CD8-positive, alpha-beta T cell (primary cell): ENCODE measurements at regions of chr5 and their contacts with region 1.

Region 1: DNA sequence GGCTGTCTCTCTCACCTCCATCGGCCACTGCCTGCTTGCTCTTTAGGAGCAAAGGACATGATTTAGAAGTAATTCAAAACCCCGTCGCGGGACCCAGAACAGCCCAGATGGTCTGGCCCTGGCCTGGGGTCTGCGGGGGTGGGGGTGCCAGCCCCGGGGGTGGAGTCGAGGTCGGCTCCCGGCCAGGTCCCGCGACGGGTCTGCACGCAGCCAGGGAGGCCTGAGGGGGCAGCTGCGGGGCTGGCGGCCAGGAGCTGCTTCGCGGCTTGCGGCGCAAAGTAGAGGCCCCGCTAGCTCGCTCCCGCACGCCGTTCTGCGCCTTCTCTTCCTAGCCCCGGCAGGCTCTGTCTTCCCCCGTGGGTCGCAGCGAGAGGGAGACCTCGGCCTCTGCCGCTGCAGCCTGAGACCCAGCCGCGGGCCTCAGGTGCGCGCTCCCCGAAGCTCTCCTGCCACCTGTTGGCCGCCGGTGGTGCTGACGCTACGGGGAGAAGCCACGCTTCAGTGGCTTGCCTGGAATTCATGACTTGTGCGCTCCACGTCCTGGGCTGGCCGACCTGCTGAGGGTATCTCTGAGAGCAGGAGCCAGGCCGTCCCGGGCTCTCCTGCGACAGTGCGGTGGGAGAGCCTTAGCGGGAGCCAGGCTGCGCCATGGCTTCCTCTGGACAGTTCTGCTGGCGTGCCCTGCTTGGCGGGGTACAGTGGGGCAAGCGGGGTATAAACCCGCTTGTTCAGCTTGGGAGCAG is 157.2 kb upstream of the PITX1 start:
- DNase-seq: peak; percentile 37 to 81 (median 66)
- ATAC-seq: peak; percentile 94
- H3K4me3 ChIP-seq: peak overlapping the region; percentile 15 to 50
- H3K4me3 Mint-ChIP-seq: peak overlapping the region; percentile 82
- H3K27ac ChIP-seq: no peak overlapping the region
- H3K27ac Mint-ChIP-seq: no peak overlapping the region
- H3K4me1 ChIP-seq: no peaks in the 10 kb centered on the region
- H3K4me1 Mint-ChIP-seq: no peaks in the 10 kb centered on the region
- H3K27me3 ChIP-seq: peaks cover 0 to 5% of the 10 kb centered on the region in 2 experiments
- H3K27me3 Mint-ChIP-seq: peaks cover 19% of the 10 kb centered on the region
- CTCF ChIP-seq: peak; percentile 68

Region 2: DNA sequence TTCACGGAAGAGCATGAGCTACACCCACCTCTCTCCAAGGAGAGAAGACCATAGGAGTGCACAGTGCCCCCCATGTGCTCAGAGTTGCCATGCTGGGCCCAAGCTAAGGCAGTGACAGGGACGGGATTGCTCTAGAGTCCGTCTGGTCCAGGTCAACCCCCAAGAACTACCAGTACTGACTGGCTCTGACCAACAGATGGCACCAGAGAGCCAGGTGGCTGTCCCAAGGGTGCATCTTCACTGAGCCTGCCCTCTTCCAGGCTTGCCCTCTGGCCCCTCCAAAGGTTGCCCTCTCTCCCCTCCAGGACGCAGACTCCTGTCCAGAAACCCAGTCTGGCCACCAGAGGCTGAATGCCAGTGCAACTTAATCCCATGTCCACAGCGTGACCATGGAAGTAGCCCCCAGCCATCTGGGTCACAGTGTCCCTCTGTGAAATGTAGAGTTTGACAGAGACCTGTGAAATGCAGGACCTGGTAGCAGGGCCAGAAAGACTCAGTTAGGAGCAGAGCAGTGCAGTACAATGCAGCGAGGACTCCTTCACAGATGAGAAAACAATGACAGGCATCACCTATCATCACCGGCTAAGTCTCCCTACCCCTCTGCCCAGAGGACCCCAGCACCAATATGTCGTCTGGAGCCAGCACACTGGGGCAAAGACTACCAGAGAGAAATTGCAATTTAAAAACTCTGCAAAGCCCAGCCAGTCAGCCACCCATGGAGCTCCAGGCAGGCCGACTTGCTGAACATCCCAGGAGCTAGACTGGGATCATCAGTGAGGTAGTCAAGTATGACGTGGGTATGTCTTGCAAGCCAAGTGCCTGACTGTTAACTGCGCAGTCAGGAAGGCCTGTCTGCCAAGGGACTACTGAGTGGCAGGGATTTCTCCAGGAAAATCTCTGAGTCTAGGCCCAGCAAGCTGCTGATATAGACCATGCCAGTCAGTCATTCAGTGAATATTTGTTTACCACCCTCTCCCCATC is 1006.8 kb before region 1 on chr5:
- CTCF ChIA-PET with region 1: no interaction called
- POLR2A ChIA-PET with region 1: no interaction called
- intact Hi-C with region 1: loop called in 1 of 2 experiments (anchors 5 kb)
- DNase-seq: peak; percentile 62 to 84 (median 77)
- ATAC-seq: peak; percentile 98
- H3K4me3 ChIP-seq: no peak overlapping the region
- H3K4me3 Mint-ChIP-seq: no peak overlapping the region
- H3K27ac ChIP-seq: no peak overlapping the region
- H3K27ac Mint-ChIP-seq: no peak overlapping the region
- H3K4me1 ChIP-seq: peaks cover 4% of the 10 kb centered on the region
- H3K4me1 Mint-ChIP-seq: no peaks in the 10 kb centered on the region
- H3K27me3 ChIP-seq: no peaks in the 10 kb centered on the region
- H3K27me3 Mint-ChIP-seq: no peaks in the 10 kb centered on the region
- CTCF ChIP-seq: peak; percentile 84

Region 3: GRCh38 chr5:134917070-134917815 is 274.0 kb before region 1 on chr5:
- CTCF ChIA-PET with region 1: no interaction called
- POLR2A ChIA-PET with region 1: no interaction called
- intact Hi-C with region 1: loop called in 1 of 2 experiments (anchors 5 kb)
- DNase-seq: peak in 1 of 9 experiments; percentile 20
- ATAC-seq: no peak
- H3K4me3 ChIP-seq: no peak overlapping the region
- H3K4me3 Mint-ChIP-seq: no peak overlapping the region
- H3K27ac ChIP-seq: no peak overlapping the region
- H3K27ac Mint-ChIP-seq: no peak overlapping the region
- H3K4me1 ChIP-seq: no peaks in the 10 kb centered on the region
- H3K4me1 Mint-ChIP-seq: no peaks in the 10 kb centered on the region
- H3K27me3 ChIP-seq: no peaks in the 10 kb centered on the region
- H3K27me3 Mint-ChIP-seq: no peaks in the 10 kb centered on the region
- CTCF ChIP-seq: no peak

Region 4: DNA sequence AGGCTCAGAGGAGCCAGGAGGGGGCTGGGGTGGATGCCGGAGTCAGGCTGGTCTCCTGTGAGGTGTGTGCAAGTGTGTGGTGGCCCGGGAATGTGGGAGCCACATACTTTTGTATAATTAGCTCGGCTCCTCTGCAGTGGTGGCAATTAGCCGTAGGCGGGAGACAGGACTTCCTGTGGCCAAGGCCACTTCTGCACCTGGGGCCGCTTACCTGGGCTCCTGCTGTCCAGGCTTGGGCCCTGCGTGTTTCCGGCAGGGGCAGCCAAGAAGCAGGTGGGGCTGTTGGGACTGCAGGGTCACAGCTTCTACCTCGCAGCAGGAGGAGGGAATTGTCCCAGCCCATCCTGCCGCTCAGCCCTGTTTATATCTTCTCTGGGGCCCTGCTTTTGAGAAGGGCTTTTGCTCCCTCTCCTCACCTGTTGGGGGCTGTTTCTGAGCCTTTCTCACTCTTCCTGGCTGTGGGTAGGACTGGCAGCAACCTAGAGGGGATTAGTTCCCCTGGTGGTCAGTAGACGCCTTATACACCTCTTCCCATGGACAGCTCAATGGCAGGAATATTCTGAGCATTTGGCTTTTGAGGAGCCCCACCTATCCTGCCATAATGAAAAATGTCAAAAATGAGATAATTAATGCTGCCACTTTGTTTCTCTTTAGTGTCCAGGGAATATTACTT is 11.8 kb before region 1 on chr5:
- CTCF ChIA-PET with region 1: interaction called, 10 read pairs
- POLR2A ChIA-PET with region 1: no interaction called
- intact Hi-C with region 1: no loop called
- DNase-seq: no peak
- ATAC-seq: no peak
- H3K4me3 ChIP-seq: no peak overlapping the region
- H3K4me3 Mint-ChIP-seq: no peak overlapping the region
- H3K27ac ChIP-seq: no peak overlapping the region
- H3K27ac Mint-ChIP-seq: no peak overlapping the region
- H3K4me1 ChIP-seq: no peaks in the 10 kb centered on the region
- H3K4me1 Mint-ChIP-seq: no peaks in the 10 kb centered on the region
- H3K27me3 ChIP-seq: no peaks in the 10 kb centered on the region
- H3K27me3 Mint-ChIP-seq: peaks cover 16% of the 10 kb centered on the region
- CTCF ChIP-seq: no peak

Region 5: GRCh38 chr5:135296904-135297816 is 105.9 kb after region 1 on chr5:
- CTCF ChIA-PET with region 1: no interaction called
- POLR2A ChIA-PET with region 1: no interaction called
- intact Hi-C with region 1: no loop called
- DNase-seq: no peak
- ATAC-seq: no peak
- H3K4me3 ChIP-seq: no peak overlapping the region
- H3K4me3 Mint-ChIP-seq: no peak overlapping the region
- H3K27ac ChIP-seq: no peak overlapping the region
- H3K27ac Mint-ChIP-seq: no peak overlapping the region
- H3K4me1 ChIP-seq: no peaks in the 10 kb centered on the region
- H3K4me1 Mint-ChIP-seq: no peaks in the 10 kb centered on the region
- H3K27me3 ChIP-seq: no peaks in the 10 kb centered on the region
- H3K27me3 Mint-ChIP-seq: peaks cover 22% of the 10 kb centered on the region
- CTCF ChIP-seq: no peak

Region 6: DNA sequence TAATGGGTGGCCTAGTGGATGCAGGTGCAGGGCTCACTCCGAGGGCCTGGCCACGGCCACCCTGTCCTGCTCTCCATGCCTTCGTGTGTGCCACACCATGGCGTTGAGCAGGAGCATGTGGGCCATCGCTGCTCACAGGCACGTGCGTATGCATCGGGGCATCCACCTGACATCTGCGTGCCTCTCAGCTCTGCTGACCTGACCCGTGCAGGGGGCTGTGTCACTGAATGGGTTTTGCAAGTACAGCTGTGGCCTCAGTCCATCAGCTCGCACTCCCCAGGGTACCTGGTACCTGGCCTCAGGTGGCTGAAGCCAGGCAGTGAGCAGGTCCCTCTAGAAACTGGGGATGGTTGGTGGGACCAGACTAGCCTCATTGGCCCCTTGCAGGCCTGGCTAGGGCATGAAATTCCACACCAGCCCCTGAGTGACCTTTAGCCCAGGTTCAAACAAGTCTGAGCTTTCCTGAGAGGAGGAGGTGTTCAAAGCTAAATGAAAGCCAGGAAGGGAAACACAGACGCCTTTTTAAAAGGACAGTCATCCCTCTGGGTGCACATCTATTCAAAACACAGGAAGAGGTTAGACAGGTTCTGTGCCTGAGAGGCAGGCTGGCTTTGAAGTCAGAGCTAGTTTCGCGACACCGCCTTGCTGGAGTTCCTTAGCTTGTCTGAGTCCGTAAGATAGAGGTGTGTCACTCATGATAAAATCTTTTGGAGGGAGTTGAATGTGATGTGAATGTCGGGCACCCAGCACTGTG is 133.8 kb after region 1 on chr5:
- CTCF ChIA-PET with region 1: interaction called, 5 read pairs
- POLR2A ChIA-PET with region 1: no interaction called
- intact Hi-C with region 1: loop called in 1 of 2 experiments (anchors 2 kb)
- DNase-seq: peak in 8 of 9 experiments; percentile 7 to 67 (median 30)
- ATAC-seq: peak; percentile 80
- H3K4me3 ChIP-seq: no peak overlapping the region
- H3K4me3 Mint-ChIP-seq: peak overlapping the region; percentile 0
- H3K27ac ChIP-seq: no peak overlapping the region
- H3K27ac Mint-ChIP-seq: peak overlapping the region; percentile 15
- H3K4me1 ChIP-seq: peaks cover 20% of the 10 kb centered on the region
- H3K4me1 Mint-ChIP-seq: peaks cover 25% of the 10 kb centered on the region
- H3K27me3 ChIP-seq: no peaks in the 10 kb centered on the region
- H3K27me3 Mint-ChIP-seq: no peaks in the 10 kb centered on the region
- CTCF ChIP-seq: no peak

Region 7: GRCh38 chr5:135332519-135333150 is 141.4 kb after region 1 on chr5:
- CTCF ChIA-PET with region 1: interaction called, 3 read pairs
- POLR2A ChIA-PET with region 1: no interaction called
- intact Hi-C with region 1: loop called in 1 of 2 experiments (anchors 1 kb)
- DNase-seq: peak in 2 of 9 experiments; percentile 13 to 44
- ATAC-seq: no peak
- H3K4me3 ChIP-seq: no peak overlapping the region
- H3K4me3 Mint-ChIP-seq: no peak overlapping the region
- H3K27ac ChIP-seq: no peak overlapping the region
- H3K27ac Mint-ChIP-seq: no peak overlapping the region
- H3K4me1 ChIP-seq: no peaks in the 10 kb centered on the region
- H3K4me1 Mint-ChIP-seq: peaks cover 4% of the 10 kb centered on the region
- H3K27me3 ChIP-seq: no peaks in the 10 kb centered on the region
- H3K27me3 Mint-ChIP-seq: no peaks in the 10 kb centered on the region
- CTCF ChIP-seq: peak; percentile 57